ENCODE measurements at regions of chr1 and their contacts with region 1.

Region 1: DNA sequence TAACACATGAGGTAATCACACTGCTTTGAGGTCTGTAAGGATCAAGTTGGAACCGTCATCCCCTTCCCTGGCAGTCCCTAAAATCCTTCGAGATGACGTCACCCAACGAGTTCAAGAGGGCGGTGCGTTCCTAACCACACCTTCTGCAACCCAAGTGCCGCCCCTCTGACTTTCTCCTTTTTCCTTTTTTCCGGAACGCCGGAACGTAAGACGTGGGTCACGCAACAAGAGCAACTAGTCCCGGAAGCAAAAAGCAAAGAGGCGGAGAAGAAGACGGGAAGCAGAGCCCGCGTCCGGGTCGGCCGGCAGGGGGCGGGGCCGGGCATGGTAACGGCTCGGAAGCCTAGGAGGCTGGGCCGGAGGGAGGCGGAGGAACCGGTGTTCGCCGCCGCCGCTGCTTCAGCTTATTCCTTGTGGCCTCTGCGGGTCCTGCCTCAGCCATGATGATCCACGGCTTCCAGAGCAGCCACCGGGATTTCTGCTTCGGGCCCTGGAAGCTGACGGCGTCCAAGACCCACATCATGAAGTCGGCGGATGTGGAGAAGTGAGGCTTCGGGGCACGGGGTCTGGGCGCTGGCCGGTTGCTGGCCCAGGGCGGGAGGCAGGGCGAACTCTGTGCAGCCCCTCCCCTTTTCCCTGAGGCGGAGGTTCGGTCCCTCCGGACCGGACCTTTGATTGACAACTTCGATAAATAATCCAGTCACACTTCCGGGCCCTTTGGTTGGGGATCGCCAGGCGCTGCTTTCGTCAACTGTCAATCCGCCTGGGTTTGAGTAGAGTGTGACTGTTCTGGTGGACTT is at the start of gene TIPRL:
- DNase-seq: peak; percentile 96
- H3K4me3 Mint-ChIP-seq: no peak within 1 kb of the TSS
- H3K27ac Mint-ChIP-seq: no peak within 1 kb of the TSS
- H3K4me1 Mint-ChIP-seq: peaks cover 14% of the 10 kb centered on the region
- H3K27me3 Mint-ChIP-seq: peaks cover 3% of the 10 kb centered on the region
- total RNA-seq, gene TIPRL: 47.1 to 48.4 TPM

Region 2: DNA sequence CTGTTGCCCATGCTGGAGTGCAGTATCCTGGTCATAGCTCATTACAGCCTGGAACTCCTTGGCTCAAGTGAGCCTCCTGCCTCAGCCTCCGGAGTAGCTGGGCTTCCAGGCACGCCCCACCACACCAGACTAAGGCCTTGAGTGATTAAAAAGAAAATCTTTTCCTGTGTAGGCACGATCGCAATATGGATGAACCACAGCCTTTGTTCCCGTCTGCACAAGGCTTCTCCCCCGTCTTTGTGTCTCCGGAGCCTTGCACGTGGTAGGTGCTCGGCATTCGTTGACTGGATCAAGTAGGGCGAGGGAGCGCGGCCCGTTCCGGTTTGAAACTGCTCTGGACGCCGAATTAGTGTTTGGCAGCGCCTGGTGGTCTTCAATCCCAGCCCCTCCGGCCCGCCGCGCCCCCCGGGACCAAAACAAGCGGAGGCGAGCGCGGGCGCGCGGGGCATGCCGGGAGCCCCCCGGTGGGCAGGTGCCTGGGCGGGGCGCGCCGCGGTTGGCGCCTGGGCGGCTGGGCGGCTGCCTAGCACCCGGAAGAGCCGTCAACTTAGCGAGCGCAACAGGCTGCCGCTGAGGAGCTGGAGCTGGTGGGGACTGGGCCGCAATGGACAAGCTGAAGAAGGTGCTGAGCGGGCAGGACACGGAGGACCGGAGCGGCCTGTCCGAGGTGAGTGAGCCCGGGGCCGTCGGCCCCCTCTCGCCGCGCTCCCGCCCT is 46.8 kb after region 1 on chr1 and contains the start of gene SFT2D2:
- CTCF ChIA-PET with region 1: no interaction called
- POLR2A ChIA-PET with region 1: interaction called, 30 read pairs
- DNase-seq: peak; percentile 84
- H3K4me3 Mint-ChIP-seq: peak within 1 kb of the TSS; percentile 95
- H3K27ac Mint-ChIP-seq: peak within 1 kb of the TSS; percentile 84
- H3K4me1 Mint-ChIP-seq: peaks cover 53% of the 10 kb centered on the region
- H3K27me3 Mint-ChIP-seq: peaks cover 8% of the 10 kb centered on the region
- total RNA-seq, gene SFT2D2: 65.6 to 72.1 TPM

Measured in activated CD4-positive, alpha-beta memory T cell treated with anti-CD3 and anti-CD28 coated beads, Interleukin-2, amount 10 ng/mL, durations not matched to agents 7 days and 5 days (primary cell).